GM12878 (cell line): ENCODE measurements at regions of chr10 and their contacts with region 1.

Region 1: DNA sequence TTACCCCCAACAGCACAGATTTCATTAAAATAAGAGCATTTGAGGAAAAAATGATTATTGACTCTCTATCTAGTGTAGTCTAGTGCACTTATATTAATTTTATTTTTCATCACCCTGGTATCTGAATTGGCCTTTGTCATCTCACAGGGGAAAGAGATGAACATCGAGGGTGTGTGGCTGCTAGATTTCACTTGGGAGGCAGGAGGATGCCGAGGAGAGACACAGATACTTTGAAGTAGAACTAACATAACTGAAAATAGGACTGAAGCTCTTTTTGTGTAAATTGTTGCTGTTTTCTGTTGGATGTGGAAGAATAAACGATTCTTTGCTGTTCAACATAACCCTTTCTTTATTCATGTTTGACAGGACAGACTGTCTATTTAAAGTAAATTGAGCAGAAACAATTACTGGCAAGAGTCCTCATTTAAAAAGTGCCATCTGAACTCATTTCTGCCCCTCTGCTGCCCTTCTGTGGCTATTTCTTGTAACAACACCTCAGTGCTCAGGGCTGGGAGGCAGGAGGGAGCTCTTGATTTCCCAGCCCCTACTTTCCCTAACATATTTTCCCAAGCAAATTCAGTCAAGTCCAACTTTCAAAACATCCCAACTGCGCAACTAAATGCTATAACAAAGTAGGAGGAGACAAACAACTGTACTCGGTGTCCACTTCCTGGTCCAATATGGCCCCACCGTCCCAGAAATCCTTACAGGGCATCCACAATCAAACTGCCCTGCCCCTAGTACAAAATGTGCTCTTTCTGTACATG is 15.6 kb downstream of the LYZL1 start:
- DNase-seq: no peak
- ATAC-seq: peak; percentile 75
- H3K4me3 ChIP-seq: no peak overlapping the region
- H3K27ac ChIP-seq: no peak overlapping the region
- H3K4me1 ChIP-seq: no peaks in the 10 kb centered on the region
- H3K27me3 ChIP-seq: no peaks in the 10 kb centered on the region
- CTCF ChIP-seq: peak; percentile 59 to 77 (median 65)
- EP300 ChIP-seq: no peak
- POLR2A ChIP-seq: no peak
- RAD21 ChIP-seq: peak; percentile 91

Region 2: GRCh38 chr10:28628184-28628893 is 676.1 kb before region 1 on chr10:
- CTCF ChIA-PET with region 1: interaction called, 5 read pairs
- POLR2A ChIA-PET with region 1: no interaction called
- RAD21 ChIA-PET with region 1: interaction called, 4 read pairs
- SMC1A ChIA-PET with region 1: interaction called, 5 read pairs
- in situ Hi-C with region 1: no loop called
- intact Hi-C with region 1: loop called (anchors 1 kb)
- DNase-seq: no peak
- ATAC-seq: peak; percentile 96
- H3K4me3 ChIP-seq: no peak overlapping the region
- H3K27ac ChIP-seq: no peak overlapping the region
- H3K4me1 ChIP-seq: no peaks in the 10 kb centered on the region
- H3K27me3 ChIP-seq: no peaks in the 10 kb centered on the region
- CTCF ChIP-seq: peak; percentile 82 to 96 (median 89)
- EP300 ChIP-seq: no peak
- POLR2A ChIP-seq: no peak
- RAD21 ChIP-seq: peak; percentile 62

Region 3: GRCh38 chr10:28663576-28664313 is 640.7 kb before region 1 on chr10:
- CTCF ChIA-PET with region 1: interaction called, 15 read pairs
- POLR2A ChIA-PET with region 1: no interaction called
- RAD21 ChIA-PET with region 1: interaction called, 9 read pairs
- SMC1A ChIA-PET with region 1: interaction called, 5 read pairs
- in situ Hi-C with region 1: loop called (anchors 5 kb)
- intact Hi-C with region 1: loop called (anchors 2 kb)
- DNase-seq: no peak
- ATAC-seq: peak; percentile 97
- H3K4me3 ChIP-seq: no peak overlapping the region
- H3K27ac ChIP-seq: no peak overlapping the region
- H3K4me1 ChIP-seq: no peaks in the 10 kb centered on the region
- H3K27me3 ChIP-seq: peaks cover 2 to 5% of the 10 kb centered on the region in 2 experiments
- CTCF ChIP-seq: peak; percentile 95 to 96 (median 96)
- EP300 ChIP-seq: no peak
- POLR2A ChIP-seq: no peak
- RAD21 ChIP-seq: peak; percentile 96

Region 4: GRCh38 chr10:28991326-28992270 is 312.8 kb before region 1 on chr10:
- CTCF ChIA-PET with region 1: no interaction called
- POLR2A ChIA-PET with region 1: no interaction called
- RAD21 ChIA-PET with region 1: no interaction called
- SMC1A ChIA-PET with region 1: no interaction called
- in situ Hi-C with region 1: no loop called
- intact Hi-C with region 1: loop called (anchors 5 kb)
- DNase-seq: no peak
- ATAC-seq: peak; percentile 80
- H3K4me3 ChIP-seq: no peak overlapping the region
- H3K27ac ChIP-seq: no peak overlapping the region
- H3K4me1 ChIP-seq: no peaks in the 10 kb centered on the region
- H3K27me3 ChIP-seq: no peaks in the 10 kb centered on the region
- CTCF ChIP-seq: peak; percentile 57 to 67 (median 64); a peak in 5 of 6 replicates
- EP300 ChIP-seq: no peak
- POLR2A ChIP-seq: no peak
- RAD21 ChIP-seq: peak; percentile 75

Region 5: GRCh38 chr10:29239569-29240472 is 64.6 kb before region 1 on chr10:
- CTCF ChIA-PET with region 1: interaction called, 14 read pairs
- POLR2A ChIA-PET with region 1: no interaction called
- RAD21 ChIA-PET with region 1: interaction called, 6 read pairs
- SMC1A ChIA-PET with region 1: interaction called, 4 read pairs
- in situ Hi-C with region 1: no loop called
- intact Hi-C with region 1: loop called (anchors 1 kb)
- DNase-seq: no peak
- ATAC-seq: peak; percentile 78
- H3K4me3 ChIP-seq: no peak overlapping the region
- H3K27ac ChIP-seq: no peak overlapping the region
- H3K4me1 ChIP-seq: no peaks in the 10 kb centered on the region
- H3K27me3 ChIP-seq: no peaks in the 10 kb centered on the region
- CTCF ChIP-seq: peak; percentile 65 to 70 (median 69)
- EP300 ChIP-seq: no peak
- POLR2A ChIP-seq: no peak
- RAD21 ChIP-seq: peak; percentile 64

Region 6: GRCh38 chr10:29257106-29257783 is 47.2 kb before region 1 on chr10:
- CTCF ChIA-PET with region 1: interaction called, 3 read pairs
- POLR2A ChIA-PET with region 1: no interaction called
- RAD21 ChIA-PET with region 1: no interaction called
- SMC1A ChIA-PET with region 1: no interaction called
- in situ Hi-C with region 1: no loop called
- intact Hi-C with region 1: loop called (anchors 5 kb)
- DNase-seq: no peak
- ATAC-seq: no peak
- H3K4me3 ChIP-seq: no peak overlapping the region
- H3K27ac ChIP-seq: no peak overlapping the region
- H3K4me1 ChIP-seq: no peaks in the 10 kb centered on the region
- H3K27me3 ChIP-seq: peaks cover 0 to 2% of the 10 kb centered on the region in 2 experiments; a peak in 3 of 4 replicates
- CTCF ChIP-seq: no peak
- EP300 ChIP-seq: no peak
- POLR2A ChIP-seq: no peak
- RAD21 ChIP-seq: no peak